Common myeloid progenitor, CD34-positive (primary cell): ENCODE measurements at regions of chr22 and their contacts with region 1.

Region 1: GRCh38 chr22:50525390-50526068 is at the start of gene SCO2:
- DNase-seq: peak; percentile 97 to 98 (median 98)
- H3K4me3 ChIP-seq: peak within 1 kb of the TSS; percentile 65 to 82 (median 77)
- H3K27ac ChIP-seq: peak within 1 kb of the TSS; percentile 25 to 76
- H3K4me1 ChIP-seq: peaks cover 2 to 58% (median 45%) of the 10 kb centered on the region in 4 experiments
- H3K27me3 ChIP-seq: peaks cover 0 to 17% (median 0%) of the 10 kb centered on the region in 5 experiments

Region 2: GRCh38 chr22:50507991-50508884 is 17.3 kb before region 1 on chr22 and contains the start of gene NCAPH2:
- CTCF ChIA-PET with region 1: interaction called, 25 read pairs
- POLR2A ChIA-PET with region 1: interaction called, 9 read pairs
- DNase-seq: peak; percentile 96 to 98 (median 98)
- H3K4me3 ChIP-seq: peak within 1 kb of the TSS; percentile 88 to 97 (median 89)
- H3K27ac ChIP-seq: peak within 1 kb of the TSS; percentile 66 to 85
- H3K4me1 ChIP-seq: peaks cover 7 to 24% (median 23%) of the 10 kb centered on the region in 4 experiments
- H3K27me3 ChIP-seq: no peaks in the 10 kb centered on the region

Region 3: GRCh38 chr22:50537765-50538164 is 12.2 kb after region 1 on chr22:
- CTCF ChIA-PET with region 1: interaction called, 53 read pairs
- POLR2A ChIA-PET with region 1: interaction called, 41 read pairs
- DNase-seq: no peak
- H3K4me3 ChIP-seq: no peak overlapping the region
- H3K27ac ChIP-seq: peak overlapping the region in 1 of 2 experiments; percentile 98
- H3K4me1 ChIP-seq: peaks cover 13 to 56% (median 35%) of the 10 kb centered on the region in 4 experiments
- H3K27me3 ChIP-seq: peaks cover 0 to 2% (median 0%) of the 10 kb centered on the region in 5 experiments

Region 4: GRCh38 chr22:50544078-50544745 is 18.7 kb after region 1 on chr22:
- CTCF ChIA-PET with region 1: interaction called, 53 read pairs
- POLR2A ChIA-PET with region 1: interaction called, 41 read pairs
- DNase-seq: peak; percentile 84 to 86 (median 85)
- H3K4me3 ChIP-seq: peak overlapping the region in 5 of 7 experiments; percentile 3 to 57 (median 40)
- H3K27ac ChIP-seq: no peak overlapping the region
- H3K4me1 ChIP-seq: peaks cover 8 to 75% (median 61%) of the 10 kb centered on the region in 4 experiments
- H3K27me3 ChIP-seq: peaks cover 0 to 28% (median 0%) of the 10 kb centered on the region in 5 experiments